Activated naive CD4-positive, alpha-beta T cell treated with anti-CD3 and anti-CD28 coated beads for 36 hours (primary cell): ENCODE measurements at regions of chr5 and their contacts with region 1.

Region 1: GRCh38 chr5:33440482-33441240 is at the start of gene TARS1:
- DNase-seq: peak; percentile 96
- H3K4me3 Mint-ChIP-seq: no peak within 1 kb of the TSS
- H3K27ac Mint-ChIP-seq: no peak within 1 kb of the TSS
- H3K4me1 Mint-ChIP-seq: peaks cover 29% of the 10 kb centered on the region
- H3K27me3 Mint-ChIP-seq: no peaks in the 10 kb centered on the region
- total RNA-seq, gene TARS1: 244 to 260 TPM

Region 2: GRCh38 chr5:32443541-32444430 is 996.9 kb before region 1 on chr5:
- CTCF ChIA-PET with region 1: no interaction called
- intact Hi-C with region 1: loop called (anchors 1 kb)
- DNase-seq: peak; percentile 50
- H3K4me3 Mint-ChIP-seq: peak overlapping the region; percentile 93
- H3K27ac Mint-ChIP-seq: peak overlapping the region; percentile 96
- H3K4me1 Mint-ChIP-seq: peaks cover 35% of the 10 kb centered on the region
- H3K27me3 Mint-ChIP-seq: no peaks in the 10 kb centered on the region

Region 3: GRCh38 chr5:33470544-33470943 is 29.9 kb after region 1 on chr5:
- CTCF ChIA-PET with region 1: interaction called, 6 read pairs
- intact Hi-C with region 1: loop called (anchors 2 kb)
- DNase-seq: no peak
- H3K4me3 Mint-ChIP-seq: no peak overlapping the region
- H3K27ac Mint-ChIP-seq: no peak overlapping the region
- H3K4me1 Mint-ChIP-seq: no peaks in the 10 kb centered on the region
- H3K27me3 Mint-ChIP-seq: no peaks in the 10 kb centered on the region

Region 4: GRCh38 chr5:33806738-33807442 is 366.2 kb after region 1 on chr5:
- CTCF ChIA-PET with region 1: no interaction called
- intact Hi-C with region 1: loop called (anchors 5 kb)
- DNase-seq: no peak
- H3K4me3 Mint-ChIP-seq: no peak overlapping the region
- H3K27ac Mint-ChIP-seq: no peak overlapping the region
- H3K4me1 Mint-ChIP-seq: peaks cover 7% of the 10 kb centered on the region
- H3K27me3 Mint-ChIP-seq: no peaks in the 10 kb centered on the region

Region 5: DNA sequence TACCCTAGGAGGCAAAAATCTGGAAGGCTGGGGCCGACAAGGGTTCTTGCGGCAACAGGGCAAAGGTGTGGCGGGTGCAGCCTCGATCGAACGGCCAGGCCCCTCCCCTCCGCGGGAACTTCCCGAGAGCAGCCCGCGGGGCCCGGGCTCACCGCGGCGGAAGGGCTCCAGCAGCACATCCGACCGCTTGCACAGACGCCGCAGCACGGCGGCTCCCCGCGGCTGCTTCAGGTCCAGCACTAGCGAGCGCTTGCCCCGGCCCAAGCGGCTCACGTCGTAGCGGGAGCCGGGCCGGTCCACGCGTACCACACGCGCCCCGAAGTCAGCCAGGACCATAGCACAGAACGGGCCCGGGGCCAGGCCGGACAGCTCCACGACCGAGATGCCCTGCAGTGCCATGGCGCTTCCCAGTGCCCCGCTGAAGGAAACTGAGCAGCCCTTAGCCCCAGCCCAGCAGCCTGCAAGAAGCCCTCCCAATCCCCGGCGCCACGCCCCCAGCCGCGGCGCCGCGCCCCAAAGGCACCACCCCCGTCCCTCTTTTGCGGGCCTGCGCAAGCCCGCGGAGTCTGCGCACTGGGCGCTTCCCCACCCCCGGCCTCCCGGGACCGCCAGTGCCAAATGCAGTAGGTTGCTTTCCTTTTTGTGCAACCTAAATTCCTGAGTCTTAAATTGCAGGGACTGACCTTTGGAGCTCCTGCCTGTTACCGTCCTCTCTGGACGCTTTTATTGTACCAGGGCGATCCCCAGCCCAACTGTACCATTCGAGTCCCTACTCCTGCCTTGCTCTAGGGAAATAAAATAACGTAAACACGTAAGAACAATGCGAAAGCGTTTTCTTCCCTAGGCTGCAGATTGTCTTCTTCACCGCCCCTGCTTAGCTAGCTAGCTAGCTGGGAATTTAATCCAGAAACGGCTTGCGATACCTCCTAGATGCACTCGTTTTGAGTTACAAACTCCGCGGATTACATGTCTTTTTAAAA is 567.2 kb after region 1 on chr5 and contains the start of gene AMACR:
- CTCF ChIA-PET with region 1: no interaction called
- intact Hi-C with region 1: loop called (anchors 1 kb)
- DNase-seq: peak; percentile 83
- H3K4me3 Mint-ChIP-seq: peak within 1 kb of the TSS; percentile 75
- H3K27ac Mint-ChIP-seq: peak within 1 kb of the TSS; percentile 89
- H3K4me1 Mint-ChIP-seq: peaks cover 26% of the 10 kb centered on the region
- H3K27me3 Mint-ChIP-seq: no peaks in the 10 kb centered on the region
- total RNA-seq, gene AMACR: 8.6 to 10.1 TPM

Region 6: GRCh38 chr5:34929150-34929719 is 1488.6 kb after region 1 on chr5 and contains the start of gene DNAJC21:
- CTCF ChIA-PET with region 1: no interaction called
- intact Hi-C with region 1: loop called (anchors 5 kb)
- DNase-seq: peak; percentile 99
- H3K4me3 Mint-ChIP-seq: peak within 1 kb of the TSS; percentile 94
- H3K27ac Mint-ChIP-seq: peak within 1 kb of the TSS; percentile 94
- H3K4me1 Mint-ChIP-seq: peaks cover 37% of the 10 kb centered on the region
- H3K27me3 Mint-ChIP-seq: no peaks in the 10 kb centered on the region
- total RNA-seq, gene DNAJC21: 59.1 to 62.1 TPM